ENCODE measurements at regions of chr2 and their contacts with region 1.

Region 1: GRCh38 chr2:224576088-224576715 is 9.0 kb downstream of the CUL3 start:
- DNase-seq: no peak
- ATAC-seq: no peak

Region 2: GRCh38 chr2:224101820-224102630 is 474.2 kb before region 1 on chr2:
- intact Hi-C with region 1: no loop called
- DNase-seq: no peak
- ATAC-seq: peak; percentile 72

Region 3: GRCh38 chr2:224543939-224544338 is 32.3 kb before region 1 on chr2:
- intact Hi-C with region 1: loop called (anchors 5 kb)
- DNase-seq: no peak
- ATAC-seq: no peak

Measured in Right ventricle myocardium inferior (tissue), 1 donor.